K562 (cell line): ENCODE measurements at regions of chr10 and their contacts with region 1.

Region 1: GRCh38 chr10:133329491-133330202 is 7.0 kb downstream of the CALY start:
- DNase-seq: peak; percentile 69 to 87 (median 74)
- ATAC-seq: peak; percentile 97
- H3K4me3 ChIP-seq: no peak overlapping the region
- H3K27ac ChIP-seq: no peak overlapping the region
- H3K4me1 ChIP-seq: peaks cover 0 to 45% of the 10 kb centered on the region in 2 experiments; a peak in 2 of 5 replicates
- H3K27me3 ChIP-seq: peaks cover 6 to 9% of the 10 kb centered on the region in 2 experiments; a peak in 4 of 5 replicates
- CTCF ChIP-seq: peak; percentile 79 to 90 (median 87)
- EP300 ChIP-seq: no peak
- POLR2A ChIP-seq: no peak
- RAD21 ChIP-seq: peak; percentile 62 to 79

Region 2: GRCh38 chr10:132762267-132762666 is 567.4 kb before region 1 on chr10:
- CTCF ChIA-PET with region 1: no interaction called
- POLR2A ChIA-PET with region 1: no interaction called
- in situ Hi-C with region 1: no loop called
- intact Hi-C with region 1: no loop called
- DNase-seq: no peak
- ATAC-seq: no peak
- H3K4me3 ChIP-seq: no peak overlapping the region
- H3K27ac ChIP-seq: no peak overlapping the region
- H3K4me1 ChIP-seq: no peaks in the 10 kb centered on the region
- H3K27me3 ChIP-seq: no peaks in the 10 kb centered on the region
- CTCF ChIP-seq: no peak
- EP300 ChIP-seq: no peak
- POLR2A ChIP-seq: no peak
- RAD21 ChIP-seq: no peak

Region 3: GRCh38 chr10:133394064-133394663 is 64.5 kb after region 1 on chr10 and contains the start of gene MTG1:
- CTCF ChIA-PET with region 1: no interaction called
- POLR2A ChIA-PET with region 1: no interaction called
- in situ Hi-C with region 1: no loop called
- intact Hi-C with region 1: loop called (anchors 10 kb)
- DNase-seq: peak; percentile 90 to 96 (median 92)
- ATAC-seq: peak; percentile 93
- H3K4me3 ChIP-seq: peak within 1 kb of the TSS; percentile 66
- H3K27ac ChIP-seq: peak within 1 kb of the TSS; percentile 98
- H3K4me1 ChIP-seq: peaks cover 17 to 57% of the 10 kb centered on the region in 2 experiments
- H3K27me3 ChIP-seq: no peaks in the 10 kb centered on the region
- CTCF ChIP-seq: peak in 2 of 3 experiments; percentile 35 to 42; a peak in 3 of 6 replicates
- EP300 ChIP-seq: no peak
- POLR2A ChIP-seq: peak; percentile 82
- RAD21 ChIP-seq: 0 out of 4 replicates have a peak, but pooled peaks of 1 of the 2 experiments have one; percentile 25
- polyA plus RNA-seq, gene MTG1: 2.8 to 3.0 TPM

Region 4: DNA sequence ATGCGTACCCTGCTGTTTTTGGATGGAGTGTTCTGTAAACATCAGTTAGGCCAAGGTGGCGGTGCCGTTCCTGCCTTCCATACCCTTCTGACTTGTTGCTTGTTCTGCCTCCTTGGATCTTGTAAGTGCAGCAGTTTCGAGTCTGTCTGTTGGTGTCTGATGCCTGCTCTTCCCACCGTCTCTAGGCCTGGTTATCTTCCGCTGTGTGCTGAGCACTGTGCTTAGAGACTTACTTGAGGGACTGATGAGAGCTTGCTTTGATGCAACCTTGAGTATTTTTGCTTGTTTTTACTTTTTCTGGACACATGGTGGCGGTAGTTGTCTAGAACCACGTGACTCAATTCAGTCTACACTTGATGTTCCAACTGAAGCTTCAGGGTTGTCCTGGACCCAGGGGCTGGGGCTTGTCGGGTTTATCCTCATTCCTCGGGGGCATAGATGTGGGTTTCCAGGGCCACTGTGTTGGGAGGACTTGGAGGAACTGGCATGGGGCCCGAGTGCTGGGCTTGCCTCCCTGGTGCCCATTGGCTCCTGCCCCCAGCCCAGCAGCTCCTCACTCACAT is 109.1 kb after region 1 on chr10:
- CTCF ChIA-PET with region 1: no interaction called
- POLR2A ChIA-PET with region 1: no interaction called
- in situ Hi-C with region 1: no loop called
- intact Hi-C with region 1: loop called (anchors 5 kb)
- DNase-seq: peak; percentile 51 to 62 (median 56)
- ATAC-seq: peak; percentile 86
- H3K4me3 ChIP-seq: no peak overlapping the region
- H3K27ac ChIP-seq: no peak overlapping the region
- H3K4me1 ChIP-seq: peaks cover 0 to 3% of the 10 kb centered on the region in 2 experiments; a peak in 1 of 5 replicates
- H3K27me3 ChIP-seq: peaks cover 0 to 7% of the 10 kb centered on the region in 2 experiments; a peak in 1 of 5 replicates
- CTCF ChIP-seq: peak; percentile 58 to 73 (median 72)
- EP300 ChIP-seq: no peak
- POLR2A ChIP-seq: no peak
- RAD21 ChIP-seq: peak in 1 of 2 experiments; percentile 44; a peak in 2 of 4 replicates

Region 5: GRCh38 chr10:133489816-133490588 is 160.4 kb after region 1 on chr10:
- CTCF ChIA-PET with region 1: no interaction called
- POLR2A ChIA-PET with region 1: no interaction called
- in situ Hi-C with region 1: loop called (anchors 5 kb)
- intact Hi-C with region 1: loop called (anchors 10 kb)
- DNase-seq: no peak
- ATAC-seq: no peak
- H3K4me3 ChIP-seq: no peak overlapping the region
- H3K27ac ChIP-seq: no peak overlapping the region
- H3K4me1 ChIP-seq: no peaks in the 10 kb centered on the region
- H3K27me3 ChIP-seq: no peaks in the 10 kb centered on the region; a peak in 1 of 5 replicates
- CTCF ChIP-seq: no peak
- EP300 ChIP-seq: no peak
- POLR2A ChIP-seq: no peak
- RAD21 ChIP-seq: no peak